HepG2 (cell line): ENCODE measurements at regions of chr12 and their contacts with region 1.

Region 1: DNA sequence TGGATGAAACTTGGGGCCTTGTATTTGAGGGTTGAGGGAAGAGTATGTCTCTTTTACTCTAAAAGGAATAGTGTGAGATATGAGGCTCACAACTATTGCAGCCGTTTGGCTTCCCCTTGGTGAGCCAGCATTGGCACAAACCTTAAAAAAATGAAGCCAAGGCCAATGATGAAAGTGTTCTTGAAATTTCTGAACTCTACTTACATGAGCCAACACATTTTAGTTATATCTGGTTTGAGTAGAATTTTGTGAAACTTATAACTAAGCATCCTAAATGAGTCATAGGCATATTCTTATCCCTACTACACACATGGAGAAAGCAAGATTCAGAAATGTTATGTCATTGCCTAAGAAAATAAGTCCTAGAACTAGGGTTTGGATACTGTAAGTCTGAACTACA is 55.3 kb upstream of the ACSS3 start:
- DNase-seq: no peak
- ATAC-seq: no peak
- H3K4me3 ChIP-seq: no peak overlapping the region
- H3K27ac ChIP-seq: no peak overlapping the region
- H3K4me1 ChIP-seq: no peaks in the 10 kb centered on the region
- H3K27me3 ChIP-seq: no peaks in the 10 kb centered on the region
- CTCF ChIP-seq: no peak
- EP300 ChIP-seq: no peak
- POLR2A ChIP-seq: no peak
- RAD21 ChIP-seq: no peak

Region 2: DNA sequence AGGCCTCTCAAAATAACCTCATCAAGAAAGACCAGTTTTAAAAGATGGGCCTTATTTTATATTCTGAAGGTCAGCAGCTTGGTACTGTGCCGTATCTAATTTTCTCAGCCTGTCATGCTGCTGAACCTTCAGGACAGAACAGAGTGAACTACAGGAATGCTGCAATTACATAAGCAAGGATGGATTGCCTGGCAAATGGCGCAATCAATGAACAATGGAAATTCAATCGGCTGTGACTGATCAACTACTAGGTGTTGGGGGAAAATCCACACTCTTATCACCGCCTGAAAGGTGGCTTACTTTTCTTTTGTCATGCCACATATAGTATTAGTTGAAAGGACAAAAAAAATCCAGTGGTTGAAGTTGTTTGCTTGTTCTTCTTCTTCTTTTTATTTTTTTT is 63.8 kb after region 1 on chr12:
- CTCF ChIA-PET with region 1: no interaction called
- POLR2A ChIA-PET with region 1: no interaction called
- in situ Hi-C with region 1: no loop called
- intact Hi-C with region 1: no loop called
- DNase-seq: peak; percentile 89
- ATAC-seq: peak; percentile 88
- H3K4me3 ChIP-seq: peak overlapping the region in 2 of 3 experiments; percentile 38 to 41; a peak in 2 of 6 replicates
- H3K27ac ChIP-seq: peak overlapping the region; percentile 73
- H3K4me1 ChIP-seq: peaks cover 87% of the 10 kb centered on the region
- H3K27me3 ChIP-seq: no peaks in the 10 kb centered on the region
- CTCF ChIP-seq: no peak
- EP300 ChIP-seq: peak in 1 of 2 experiments; percentile 88; a peak in 2 of 4 replicates
- POLR2A ChIP-seq: no peak
- RAD21 ChIP-seq: no peak

Region 3: DNA sequence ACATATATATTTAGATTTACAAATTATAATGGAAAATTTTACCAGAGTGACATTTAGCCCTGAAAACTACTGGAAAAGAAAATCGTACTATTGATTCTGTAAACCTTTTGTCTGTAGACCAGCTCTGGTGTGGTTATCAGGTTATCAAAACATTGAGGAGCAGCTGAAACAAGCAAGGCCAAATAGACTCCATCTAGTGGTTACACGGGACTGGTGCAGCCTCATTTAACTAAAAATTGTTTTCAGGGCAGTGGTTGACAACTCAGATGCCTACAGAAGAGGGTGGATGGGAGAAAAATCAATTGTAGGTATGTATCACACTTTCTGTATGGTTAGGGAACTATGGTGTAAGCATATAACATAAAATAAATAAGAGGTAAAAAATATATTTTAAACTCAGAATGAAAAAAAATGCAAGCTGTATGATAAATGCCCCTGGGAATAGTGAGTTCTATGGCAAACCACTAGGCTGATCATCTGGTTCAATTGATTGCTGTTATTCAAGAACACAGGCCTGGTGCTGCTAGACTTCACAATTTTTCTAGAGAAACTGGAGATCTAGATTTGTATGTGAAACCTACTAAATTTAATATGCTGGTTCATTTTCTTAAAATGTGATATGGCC is 106.5 kb after region 1 on chr12:
- CTCF ChIA-PET with region 1: no interaction called
- POLR2A ChIA-PET with region 1: no interaction called
- in situ Hi-C with region 1: no loop called
- intact Hi-C with region 1: loop called (anchors 10 kb)
- DNase-seq: peak; percentile 72
- ATAC-seq: peak; percentile 90
- H3K4me3 ChIP-seq: no peak overlapping the region
- H3K27ac ChIP-seq: peak overlapping the region; percentile 31
- H3K4me1 ChIP-seq: peaks cover 22% of the 10 kb centered on the region
- H3K27me3 ChIP-seq: no peaks in the 10 kb centered on the region
- CTCF ChIP-seq: peak; percentile 73
- EP300 ChIP-seq: no peak
- POLR2A ChIP-seq: no peak
- RAD21 ChIP-seq: peak; percentile 39; the same call in 1 of the 2 replicates

Region 4: DNA sequence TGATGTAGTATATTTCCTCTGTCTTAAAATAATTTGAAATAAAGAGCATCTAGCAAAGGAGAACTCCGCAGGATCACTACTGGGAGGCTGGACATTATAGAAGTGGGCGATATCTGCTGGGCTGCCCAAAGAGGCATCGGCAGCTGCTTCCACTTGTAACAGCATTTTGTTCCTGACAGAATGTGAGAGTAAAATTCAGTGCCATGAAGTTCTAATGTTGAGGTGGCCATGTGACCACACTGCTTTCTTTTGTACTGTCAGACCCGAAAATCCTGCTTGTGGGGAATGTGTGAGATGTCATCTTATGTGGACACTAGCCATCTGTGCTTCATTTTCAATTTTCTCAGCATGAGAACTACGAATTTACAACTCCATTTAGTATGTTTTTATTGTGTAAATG is 207.2 kb after region 1 on chr12:
- CTCF ChIA-PET with region 1: no interaction called
- POLR2A ChIA-PET with region 1: no interaction called
- in situ Hi-C with region 1: no loop called
- intact Hi-C with region 1: no loop called
- DNase-seq: no peak
- ATAC-seq: no peak
- H3K4me3 ChIP-seq: no peak overlapping the region
- H3K27ac ChIP-seq: no peak overlapping the region
- H3K4me1 ChIP-seq: no peaks in the 10 kb centered on the region
- H3K27me3 ChIP-seq: no peaks in the 10 kb centered on the region
- CTCF ChIP-seq: no peak
- EP300 ChIP-seq: no peak
- POLR2A ChIP-seq: no peak
- RAD21 ChIP-seq: no peak